GM12878 (cell line): ENCODE measurements at regions of chr14 and their contacts with region 1.

Region 1: GRCh38 chr14:106417224-106418049 is 891.1 kb downstream of the TMEM121 start:
- DNase-seq: peak; percentile 72
- ATAC-seq: peak; percentile 99
- H3K4me3 ChIP-seq: no peak overlapping the region
- H3K27ac ChIP-seq: no peak overlapping the region
- H3K4me1 ChIP-seq: no peaks in the 10 kb centered on the region
- H3K27me3 ChIP-seq: no peaks in the 10 kb centered on the region; a peak in 1 of 4 replicates
- CTCF ChIP-seq: peak; percentile 99 to 100 (median 100)
- EP300 ChIP-seq: no peak
- POLR2A ChIP-seq: no peak
- RAD21 ChIP-seq: peak; percentile 49; the same call in 1 of the 2 replicates

Region 2: GRCh38 chr14:105549481-105549880 is 868.0 kb before region 1 on chr14:
- CTCF ChIA-PET with region 1: interaction called, 13 read pairs
- POLR2A ChIA-PET with region 1: no interaction called
- RAD21 ChIA-PET with region 1: no interaction called
- SMC1A ChIA-PET with region 1: no interaction called
- in situ Hi-C with region 1: no loop called
- intact Hi-C with region 1: no loop called
- DNase-seq: no peak
- ATAC-seq: no peak
- H3K4me3 ChIP-seq: no peak overlapping the region
- H3K27ac ChIP-seq: no peak overlapping the region
- H3K4me1 ChIP-seq: no peaks in the 10 kb centered on the region
- H3K27me3 ChIP-seq: peaks cover 0 to under 1% of the 10 kb centered on the region in 2 experiments; a peak in 1 of 4 replicates
- CTCF ChIP-seq: no peak
- EP300 ChIP-seq: no peak
- POLR2A ChIP-seq: no peak
- RAD21 ChIP-seq: no peak

Region 3: DNA sequence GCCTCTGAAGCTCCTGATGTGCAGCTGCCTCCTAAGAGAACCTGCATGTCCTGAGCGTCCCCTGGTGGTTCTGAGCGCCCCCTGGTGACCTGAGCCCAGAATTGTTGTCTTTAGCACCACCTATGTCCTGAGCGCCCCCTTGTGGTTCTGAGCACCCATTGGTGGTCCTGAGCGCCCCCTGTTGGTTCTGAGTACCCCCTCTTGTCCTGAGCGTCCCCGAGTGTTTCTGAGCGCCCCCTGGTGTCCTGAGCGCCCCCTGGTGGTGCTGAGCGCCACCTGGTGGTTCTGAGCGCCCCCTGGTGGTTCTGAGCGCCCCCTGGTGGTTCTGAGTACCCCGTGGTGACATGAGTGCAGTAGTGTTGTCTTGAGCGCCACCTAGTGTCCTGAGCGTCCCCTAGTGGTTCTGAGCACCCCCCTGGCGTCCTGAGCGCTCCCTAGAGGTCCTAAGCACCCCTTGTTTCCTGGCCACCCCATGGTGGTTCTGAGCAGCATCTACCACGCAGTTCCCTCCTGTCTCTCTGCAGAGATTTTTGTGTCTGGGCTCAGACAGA is 108.5 kb before region 1 on chr14:
- CTCF ChIA-PET with region 1: interaction called, 63 read pairs
- POLR2A ChIA-PET with region 1: no interaction called
- RAD21 ChIA-PET with region 1: interaction called, 5 read pairs
- SMC1A ChIA-PET with region 1: interaction called, 3 read pairs
- in situ Hi-C with region 1: no loop called
- intact Hi-C with region 1: no loop called
- DNase-seq: peak; percentile 83
- ATAC-seq: peak; percentile 99
- H3K4me3 ChIP-seq: no peak overlapping the region
- H3K27ac ChIP-seq: no peak overlapping the region
- H3K4me1 ChIP-seq: peaks cover 6% of the 10 kb centered on the region
- H3K27me3 ChIP-seq: no peaks in the 10 kb centered on the region
- CTCF ChIP-seq: peak; percentile 85 to 100 (median 100); a peak in 5 of 6 replicates
- EP300 ChIP-seq: no peak
- POLR2A ChIP-seq: no peak
- RAD21 ChIP-seq: peak; percentile 50

Region 4: DNA sequence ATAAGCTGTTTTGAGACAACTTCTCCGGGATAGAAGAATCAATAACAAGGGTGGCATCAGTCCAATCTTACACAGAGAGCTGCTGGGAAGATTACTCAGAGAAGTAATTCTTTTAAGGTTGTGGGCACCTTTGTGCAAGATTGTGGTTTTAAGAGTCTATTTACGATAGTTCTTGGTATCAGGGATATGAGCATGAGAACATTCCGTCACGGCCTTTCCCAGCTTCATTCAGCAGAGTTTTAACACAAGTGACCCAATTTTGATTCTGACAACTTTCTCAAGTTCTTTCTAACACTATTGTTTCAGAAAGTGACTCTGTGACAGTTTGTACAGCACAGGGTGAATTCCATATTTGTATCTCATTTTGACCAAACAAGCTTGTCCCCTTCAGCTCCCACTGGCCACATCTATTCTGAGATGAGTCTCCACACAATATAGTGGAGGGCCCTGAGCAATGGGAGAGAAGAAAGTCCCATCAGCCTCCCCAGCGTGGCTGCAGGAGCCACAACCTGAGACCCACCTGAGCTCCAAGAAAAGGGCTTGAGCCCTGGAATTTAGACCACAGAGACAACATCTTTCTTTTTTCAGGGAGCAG is 21.9 kb before region 1 on chr14:
- CTCF ChIA-PET with region 1: interaction called, 61 read pairs
- POLR2A ChIA-PET with region 1: no interaction called
- RAD21 ChIA-PET with region 1: interaction called, 3 read pairs
- SMC1A ChIA-PET with region 1: interaction called, 3 read pairs
- in situ Hi-C with region 1: no loop called
- intact Hi-C with region 1: no loop called
- DNase-seq: no peak
- ATAC-seq: peak; percentile 45
- H3K4me3 ChIP-seq: no peak overlapping the region
- H3K27ac ChIP-seq: no peak overlapping the region
- H3K4me1 ChIP-seq: no peaks in the 10 kb centered on the region
- H3K27me3 ChIP-seq: peaks cover 0 to 3% of the 10 kb centered on the region in 2 experiments; a peak in 2 of 4 replicates
- CTCF ChIP-seq: no peak
- EP300 ChIP-seq: no peak
- POLR2A ChIP-seq: no peak
- RAD21 ChIP-seq: no peak

Region 5: GRCh38 chr14:106491851-106492250 is 74.4 kb after region 1 on chr14:
- CTCF ChIA-PET with region 1: interaction called, 10 read pairs
- POLR2A ChIA-PET with region 1: no interaction called
- RAD21 ChIA-PET with region 1: interaction called, 3 read pairs
- SMC1A ChIA-PET with region 1: no interaction called
- in situ Hi-C with region 1: no loop called
- intact Hi-C with region 1: no loop called
- DNase-seq: no peak
- ATAC-seq: no peak
- H3K4me3 ChIP-seq: no peak overlapping the region
- H3K27ac ChIP-seq: no peak overlapping the region
- H3K4me1 ChIP-seq: no peaks in the 10 kb centered on the region
- H3K27me3 ChIP-seq: peaks cover 0 to 4% of the 10 kb centered on the region in 2 experiments; a peak in 1 of 4 replicates
- CTCF ChIP-seq: peak; percentile 30 to 64 (median 58); a peak in 5 of 6 replicates
- EP300 ChIP-seq: no peak
- POLR2A ChIP-seq: no peak
- RAD21 ChIP-seq: peak; percentile 68

Region 6: DNA sequence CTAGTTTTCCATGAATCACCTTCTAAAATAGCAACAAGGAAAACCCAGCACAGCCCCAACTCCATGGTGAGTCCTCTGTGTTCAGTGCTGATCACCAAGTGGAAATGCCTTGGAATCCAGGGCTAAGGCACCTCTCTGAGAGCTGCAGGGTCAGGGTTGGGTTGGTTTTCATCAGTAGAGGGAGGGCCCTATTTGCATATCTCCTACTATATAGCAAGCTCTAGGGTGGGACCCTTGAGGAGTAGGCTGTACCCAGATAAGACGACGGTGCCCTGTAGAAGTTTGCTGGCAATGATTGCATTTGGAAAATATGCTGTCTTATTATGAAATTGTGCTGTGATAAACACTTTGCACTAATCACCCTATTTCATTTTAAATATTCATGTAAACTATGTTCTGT is 120.8 kb after region 1 on chr14:
- CTCF ChIA-PET with region 1: interaction called, 22 read pairs
- POLR2A ChIA-PET with region 1: no interaction called
- RAD21 ChIA-PET with region 1: no interaction called
- SMC1A ChIA-PET with region 1: interaction called, 4 read pairs
- in situ Hi-C with region 1: no loop called
- intact Hi-C with region 1: no loop called
- DNase-seq: no peak
- ATAC-seq: no peak
- H3K4me3 ChIP-seq: no peak overlapping the region
- H3K27ac ChIP-seq: no peak overlapping the region
- H3K4me1 ChIP-seq: peaks cover 7% of the 10 kb centered on the region; the same call in 1 of the 2 replicates
- H3K27me3 ChIP-seq: no peaks in the 10 kb centered on the region
- CTCF ChIP-seq: no peak
- EP300 ChIP-seq: no peak
- POLR2A ChIP-seq: no peak
- RAD21 ChIP-seq: no peak